Activated CD8-positive, alpha-beta memory T cell treated with anti-CD3 and anti-CD28 coated beads, Interleukin-2, amount 10 ng/mL, durations not matched to agents 7 days and 5 days (primary cell): ENCODE measurements at regions of chr1 and their contacts with region 1.

Region 1: GRCh38 chr1:44002606-44003157 is 11.3 kb downstream of the CCDC24 start:
- DNase-seq: no peak
- ATAC-seq: no peak
- H3K4me3 Mint-ChIP-seq: no peak overlapping the region
- H3K27ac Mint-ChIP-seq: no peak overlapping the region
- H3K4me1 Mint-ChIP-seq: peaks cover 7% of the 10 kb centered on the region
- H3K27me3 Mint-ChIP-seq: no peaks in the 10 kb centered on the region

Region 2: DNA sequence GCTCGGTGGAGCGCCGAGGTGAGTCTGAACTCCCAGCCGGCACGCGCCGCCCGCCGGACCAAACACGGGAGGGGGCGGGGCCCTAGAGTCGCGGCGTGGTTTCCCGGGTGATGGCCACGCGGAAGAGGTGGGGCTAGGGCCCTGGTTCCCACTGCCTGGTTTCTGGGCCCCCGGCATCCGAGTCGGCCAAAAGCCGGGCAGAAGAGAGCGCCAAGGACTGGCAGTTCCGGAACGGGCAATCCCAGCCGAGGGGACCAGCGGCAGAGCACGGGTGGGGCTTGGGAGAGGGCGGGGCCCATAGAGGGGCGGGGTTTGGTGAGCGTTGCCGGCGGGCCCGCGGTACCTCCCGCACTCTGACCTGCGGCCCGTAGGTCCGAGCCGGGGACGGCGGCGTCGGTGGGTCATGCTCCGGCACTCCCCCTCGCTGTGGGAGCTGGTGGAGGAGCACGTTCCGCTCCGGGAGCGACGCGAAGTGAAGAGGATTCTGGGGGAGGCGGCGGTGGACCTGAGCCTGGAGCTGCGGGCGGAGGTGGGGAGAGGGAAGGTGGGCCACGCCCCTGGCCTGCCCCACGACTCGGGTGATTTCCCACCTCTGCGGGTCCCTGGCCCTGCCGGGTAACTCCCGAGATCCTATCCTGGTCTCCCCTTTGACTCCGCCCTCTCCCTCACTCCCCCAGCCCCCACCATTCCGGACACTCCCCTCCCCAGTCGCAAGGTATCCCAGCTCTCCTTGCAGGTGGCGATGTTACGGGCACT is 11.0 kb before region 1 on chr1 and contains the start of gene CCDC24:
- CTCF ChIA-PET with region 1: interaction called, 17 read pairs
- DNase-seq: peak; percentile 83
- ATAC-seq: peak; percentile 86
- H3K4me3 Mint-ChIP-seq: peak within 1 kb of the TSS; percentile 83
- H3K27ac Mint-ChIP-seq: peak within 1 kb of the TSS; percentile 82
- H3K4me1 Mint-ChIP-seq: peaks cover 16% of the 10 kb centered on the region
- H3K27me3 Mint-ChIP-seq: no peaks in the 10 kb centered on the region
- total RNA-seq, gene CCDC24: 1.3 to 1.5 TPM

Region 3: GRCh38 chr1:44012941-44013609 is 10.4 kb after region 1 on chr1:
- CTCF ChIA-PET with region 1: interaction called, 10 read pairs
- DNase-seq: no peak
- ATAC-seq: no peak
- H3K4me3 Mint-ChIP-seq: no peak overlapping the region
- H3K27ac Mint-ChIP-seq: no peak overlapping the region
- H3K4me1 Mint-ChIP-seq: peaks cover 4% of the 10 kb centered on the region
- H3K27me3 Mint-ChIP-seq: no peaks in the 10 kb centered on the region

Region 4: DNA sequence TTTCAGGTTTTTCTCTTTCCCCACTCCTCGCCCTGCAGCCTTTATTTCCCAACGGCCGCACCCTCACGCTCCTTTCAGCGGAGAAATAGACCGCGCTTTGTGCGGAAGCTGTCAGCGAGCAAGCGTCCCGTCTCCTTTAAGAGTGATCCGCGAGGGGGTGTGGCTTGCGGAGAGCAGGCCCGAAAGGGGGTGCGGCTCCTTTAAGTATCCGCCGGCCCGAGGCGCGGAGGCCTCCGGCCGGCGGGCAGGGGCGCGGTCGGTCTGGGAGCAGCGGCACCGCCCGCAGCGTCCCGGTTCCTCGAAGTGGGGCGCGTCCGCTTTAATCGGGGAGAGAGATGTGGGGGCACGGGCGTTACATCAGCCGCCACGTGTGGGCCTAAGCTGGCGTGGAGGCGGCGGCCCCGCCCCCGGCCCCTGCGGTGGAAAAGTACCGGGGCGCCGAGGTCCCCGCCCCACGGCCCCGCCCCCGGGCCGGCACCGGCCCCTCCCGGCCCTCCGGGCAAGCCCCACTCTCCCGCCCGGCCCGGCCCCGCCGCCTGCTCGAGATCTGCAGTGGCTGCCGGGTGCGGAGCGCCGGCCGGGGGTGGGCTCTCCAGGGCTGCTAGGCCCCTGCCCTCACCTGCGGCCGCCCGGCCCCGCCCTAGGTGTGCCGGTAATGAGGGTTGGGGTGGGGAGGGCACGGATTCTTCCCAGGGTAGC is 27.4 kb after region 1 on chr1:
- CTCF ChIA-PET with region 1: interaction called, 115 read pairs
- DNase-seq: peak; percentile 94
- ATAC-seq: peak; percentile 86
- H3K4me3 Mint-ChIP-seq: peak overlapping the region; percentile 89
- H3K27ac Mint-ChIP-seq: peak overlapping the region; percentile 96
- H3K4me1 Mint-ChIP-seq: peaks cover 20% of the 10 kb centered on the region
- H3K27me3 Mint-ChIP-seq: no peaks in the 10 kb centered on the region

Region 5: GRCh38 chr1:44036409-44037139 is 33.9 kb after region 1 on chr1:
- CTCF ChIA-PET with region 1: interaction called, 115 read pairs
- DNase-seq: peak; percentile 77
- ATAC-seq: peak; percentile 72
- H3K4me3 Mint-ChIP-seq: no peak overlapping the region
- H3K27ac Mint-ChIP-seq: no peak overlapping the region
- H3K4me1 Mint-ChIP-seq: peaks cover 7% of the 10 kb centered on the region
- H3K27me3 Mint-ChIP-seq: peaks cover 7% of the 10 kb centered on the region

Region 6: GRCh38 chr1:44044071-44044801 is 41.6 kb after region 1 on chr1:
- CTCF ChIA-PET with region 1: interaction called, 60 read pairs
- DNase-seq: no peak
- ATAC-seq: no peak
- H3K4me3 Mint-ChIP-seq: no peak overlapping the region
- H3K27ac Mint-ChIP-seq: no peak overlapping the region
- H3K4me1 Mint-ChIP-seq: peaks cover 13% of the 10 kb centered on the region
- H3K27me3 Mint-ChIP-seq: peaks cover 24% of the 10 kb centered on the region